ENCODE measurements at regions of chr1 and their contacts with region 1.

Region 1: DNA sequence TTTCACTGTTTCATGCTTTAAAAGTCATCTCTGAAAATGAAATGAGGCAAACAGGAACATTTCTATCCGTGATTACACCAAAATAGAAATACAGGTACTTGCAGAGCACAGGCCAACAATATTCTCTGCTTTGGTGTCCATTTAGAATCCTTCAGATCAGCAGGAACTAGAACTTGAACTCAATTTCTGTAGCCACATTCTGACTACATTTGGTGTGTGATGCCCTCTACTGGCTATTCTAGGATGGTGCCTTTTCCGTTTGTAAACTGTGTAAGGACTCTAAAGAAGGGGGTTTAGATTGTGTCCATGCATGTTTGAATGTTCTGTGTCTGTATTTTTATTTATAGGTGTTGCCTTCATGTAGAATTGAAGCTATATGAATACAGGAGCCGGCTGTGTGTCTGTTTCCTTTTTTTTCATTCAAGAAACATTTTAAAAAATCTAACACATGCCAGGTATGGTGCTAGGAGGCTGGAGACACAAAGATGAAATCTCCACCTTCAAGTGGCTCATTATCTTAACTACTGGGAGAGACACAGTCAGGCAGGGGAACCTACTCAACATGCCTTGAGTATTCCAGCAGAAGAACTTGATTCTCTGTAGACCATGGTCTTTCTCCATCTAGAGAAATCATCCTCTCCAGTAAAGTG is 7.6 kb upstream of the ZNF326 start:
- DNase-seq: peak; percentile 59
- H3K4me3 ChIP-seq: no peak overlapping the region
- H3K27ac ChIP-seq: no peak overlapping the region
- H3K4me1 ChIP-seq: no peaks in the 10 kb centered on the region
- H3K27me3 ChIP-seq: no peaks in the 10 kb centered on the region
- CTCF ChIP-seq: peak; percentile 31 to 88 (median 82)
- POLR2A ChIP-seq: no peak

Region 2: GRCh38 chr1:89804642-89805237 is 182.6 kb before region 1 on chr1:
- intact Hi-C with region 1: loop called (anchors 2 kb)
- DNase-seq: peak; percentile 80
- H3K4me3 ChIP-seq: no peak overlapping the region
- H3K27ac ChIP-seq: no peak overlapping the region
- H3K4me1 ChIP-seq: no peaks in the 10 kb centered on the region
- H3K27me3 ChIP-seq: no peaks in the 10 kb centered on the region
- CTCF ChIP-seq: peak; percentile 38 to 82 (median 78)
- POLR2A ChIP-seq: no peak

Region 3: GRCh38 chr1:89843281-89844121 is 143.8 kb before region 1 on chr1:
- intact Hi-C with region 1: loop called (anchors 5 kb)
- DNase-seq: peak; percentile 58
- H3K4me3 ChIP-seq: peak overlapping the region; percentile 53 to 64
- H3K27ac ChIP-seq: peak overlapping the region; percentile 56 to 75
- H3K4me1 ChIP-seq: no peaks in the 10 kb centered on the region
- H3K27me3 ChIP-seq: no peaks in the 10 kb centered on the region
- CTCF ChIP-seq: peak; percentile 45 to 76 (median 56)
- POLR2A ChIP-seq: no peak

Region 4: DNA sequence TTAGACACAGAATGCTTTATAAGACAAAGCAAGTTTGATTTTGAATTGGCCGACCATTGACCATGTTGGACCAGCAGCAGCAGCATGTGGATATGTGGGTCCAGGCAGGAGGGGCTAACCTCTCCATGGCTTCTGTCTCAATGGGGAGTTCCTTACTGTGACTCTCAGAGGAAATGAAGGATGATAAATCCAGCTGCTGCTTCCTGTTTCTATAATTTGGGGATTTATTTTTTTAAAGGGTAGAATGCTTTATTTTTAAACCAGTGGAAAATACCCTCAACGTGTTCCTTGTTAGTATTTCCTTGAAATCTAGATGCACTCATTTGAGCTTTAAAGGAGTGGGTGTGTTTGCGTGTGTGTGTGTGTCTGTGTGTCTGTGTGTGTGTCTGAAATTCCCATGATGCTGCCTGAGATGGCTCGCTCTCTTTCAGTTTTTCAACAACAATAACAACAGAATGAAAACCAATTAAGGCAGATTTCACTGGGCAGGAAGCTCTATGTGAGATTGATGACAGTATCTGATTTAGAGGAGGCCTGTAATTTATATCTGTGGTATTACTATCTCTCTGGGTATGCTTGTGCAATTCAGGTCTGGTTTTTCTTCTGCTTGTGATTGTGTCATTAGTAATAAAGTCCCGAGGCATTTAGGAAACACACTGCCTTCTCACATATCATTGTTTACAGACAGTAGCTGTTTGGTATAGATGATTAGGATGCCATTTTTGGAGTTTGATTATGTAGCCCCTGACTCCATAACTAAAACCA is 78.4 kb before region 1 on chr1:
- intact Hi-C with region 1: no loop called
- DNase-seq: no peak
- H3K4me3 ChIP-seq: no peak overlapping the region
- H3K27ac ChIP-seq: no peak overlapping the region
- H3K4me1 ChIP-seq: no peaks in the 10 kb centered on the region
- H3K27me3 ChIP-seq: no peaks in the 10 kb centered on the region
- CTCF ChIP-seq: no peak
- POLR2A ChIP-seq: no peak

Region 5: DNA sequence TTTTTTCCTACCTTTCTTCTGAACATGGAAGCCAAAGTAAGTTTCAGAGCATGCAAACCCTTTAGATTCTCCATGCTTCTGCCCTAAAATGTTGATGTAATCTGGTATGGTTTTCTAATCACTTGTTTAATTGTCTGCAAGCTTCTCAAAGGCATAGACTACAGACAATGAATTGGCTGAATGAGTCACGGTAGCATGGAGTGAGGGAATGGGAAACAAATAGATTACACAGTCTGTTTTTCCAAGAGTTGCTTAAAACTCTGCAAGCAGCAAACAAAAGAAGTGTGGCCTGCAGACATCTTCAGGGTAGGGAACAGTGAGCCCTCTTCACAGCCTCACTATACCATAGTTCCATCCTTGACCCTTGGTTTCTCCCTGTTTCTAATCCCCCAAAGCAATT is 403.8 kb after region 1 on chr1:
- intact Hi-C with region 1: no loop called
- DNase-seq: no peak
- H3K4me3 ChIP-seq: no peak overlapping the region
- H3K27ac ChIP-seq: no peak overlapping the region
- H3K4me1 ChIP-seq: no peaks in the 10 kb centered on the region
- H3K27me3 ChIP-seq: no peaks in the 10 kb centered on the region
- CTCF ChIP-seq: no peak
- POLR2A ChIP-seq: no peak

Measured in prostate gland (tissue), 2 donors.